Activated CD4-positive, alpha-beta memory T cell treated with anti-CD3 and anti-CD28 coated beads for 36 hours (primary cell): ENCODE measurements at regions of chr4 and their contacts with region 1.

Region 1: DNA sequence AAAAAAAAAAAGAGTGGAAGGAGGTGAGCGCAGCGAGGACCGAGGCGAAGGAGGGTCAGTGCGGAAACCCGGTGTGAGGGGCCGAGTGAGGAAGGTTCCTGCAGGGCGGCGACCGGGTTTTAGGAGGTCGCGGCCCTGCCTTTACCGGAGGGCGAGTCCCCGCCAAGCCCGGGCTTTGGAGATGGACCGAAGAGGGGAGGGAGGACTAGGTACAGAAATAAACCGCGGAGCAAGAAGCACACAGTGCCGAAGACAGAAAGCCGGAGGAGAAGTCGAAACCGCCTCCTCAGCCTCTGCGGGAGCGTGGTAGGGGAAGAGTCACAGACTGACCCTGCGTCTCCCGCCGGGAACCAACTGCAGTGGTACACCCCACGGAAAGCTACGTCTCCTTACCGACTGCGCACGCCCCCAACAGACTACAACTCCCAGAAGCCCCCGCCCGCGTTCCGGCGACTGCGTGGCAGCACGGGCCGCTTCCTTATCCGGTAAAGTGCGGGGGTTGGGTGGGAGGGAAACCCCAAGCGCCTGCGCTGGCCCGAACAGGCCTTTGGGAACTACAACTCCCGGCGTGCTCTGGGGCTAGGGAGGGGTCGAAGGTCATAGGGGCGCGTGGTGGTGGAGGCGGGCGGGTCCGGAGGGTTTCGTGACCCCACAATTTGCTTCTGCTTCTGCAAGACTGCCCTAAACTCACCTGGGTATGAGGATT is at the start of gene NFXL1:
- DNase-seq: peak; percentile 98
- H3K4me3 Mint-ChIP-seq: peak within 1 kb of the TSS; percentile 97
- H3K27ac Mint-ChIP-seq: peak within 1 kb of the TSS; percentile 93
- H3K4me1 Mint-ChIP-seq: peaks cover 30% of the 10 kb centered on the region
- H3K27me3 Mint-ChIP-seq: no peaks in the 10 kb centered on the region
- total RNA-seq, gene NFXL1: 10.9 to 12.0 TPM

Region 2: GRCh38 chr4:47485047-47485692 is 429.2 kb before region 1 on chr4 and contains the start of gene ATP10D:
- CTCF ChIA-PET with region 1: no interaction called
- POLR2A ChIA-PET with region 1: no interaction called
- intact Hi-C with region 1: loop called (anchors 5 kb)
- DNase-seq: peak; percentile 86
- H3K4me3 Mint-ChIP-seq: peak within 1 kb of the TSS; percentile 90
- H3K27ac Mint-ChIP-seq: peak within 1 kb of the TSS; percentile 76
- H3K4me1 Mint-ChIP-seq: peaks cover 20% of the 10 kb centered on the region
- H3K27me3 Mint-ChIP-seq: no peaks in the 10 kb centered on the region
- total RNA-seq, gene ATP10D: 2.8 to 3.0 TPM

Region 3: DNA sequence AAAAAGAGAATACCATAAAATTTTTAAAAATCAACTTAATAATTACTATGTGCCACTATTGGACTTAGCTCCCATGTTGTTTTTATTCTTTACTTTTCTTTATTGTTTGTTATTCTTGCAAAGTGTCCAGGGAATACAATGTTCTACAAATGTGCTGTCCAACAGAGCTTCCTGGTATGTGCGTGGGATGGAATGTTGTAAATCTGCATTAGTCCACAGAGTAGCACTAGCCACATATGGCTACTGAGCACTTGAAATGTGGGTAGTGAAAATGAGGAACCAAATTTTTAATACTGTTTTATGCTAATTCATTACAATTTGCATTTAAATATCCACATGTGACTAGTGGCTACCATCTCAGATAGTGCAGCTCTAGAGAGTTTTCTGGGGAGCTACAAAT is 62.2 kb before region 1 on chr4:
- CTCF ChIA-PET with region 1: no interaction called
- POLR2A ChIA-PET with region 1: no interaction called
- intact Hi-C with region 1: no loop called
- DNase-seq: no peak
- H3K4me3 Mint-ChIP-seq: no peak overlapping the region
- H3K27ac Mint-ChIP-seq: no peak overlapping the region
- H3K4me1 Mint-ChIP-seq: no peaks in the 10 kb centered on the region
- H3K27me3 Mint-ChIP-seq: no peaks in the 10 kb centered on the region

Region 4: GRCh38 chr4:47873877-47874541 is 40.4 kb before region 1 on chr4:
- CTCF ChIA-PET with region 1: no interaction called
- POLR2A ChIA-PET with region 1: no interaction called
- intact Hi-C with region 1: loop called (anchors 2 kb)
- DNase-seq: no peak
- H3K4me3 Mint-ChIP-seq: no peak overlapping the region
- H3K27ac Mint-ChIP-seq: peak overlapping the region; percentile 61
- H3K4me1 Mint-ChIP-seq: peaks cover 20% of the 10 kb centered on the region
- H3K27me3 Mint-ChIP-seq: no peaks in the 10 kb centered on the region

Region 5: DNA sequence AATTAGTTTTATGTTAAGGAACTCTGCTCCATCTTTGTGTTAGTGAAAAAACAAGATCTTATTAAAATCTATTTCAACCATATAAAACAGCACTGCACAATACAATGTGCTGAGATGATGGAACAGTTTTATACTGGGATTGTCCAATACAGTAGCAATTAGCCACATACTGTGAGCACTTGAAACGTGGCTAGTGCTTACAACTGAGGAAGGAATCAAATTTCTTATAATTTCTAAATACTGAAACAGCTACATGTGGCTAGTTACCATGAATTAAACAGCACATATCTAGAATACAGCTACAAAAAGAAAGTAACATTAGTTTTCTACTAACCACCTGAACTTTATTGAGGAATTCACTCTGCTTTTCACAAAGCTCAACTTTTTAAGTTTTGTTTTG is 14.7 kb before region 1 on chr4:
- CTCF ChIA-PET with region 1: no interaction called
- POLR2A ChIA-PET with region 1: no interaction called
- intact Hi-C with region 1: no loop called
- DNase-seq: no peak
- H3K4me3 Mint-ChIP-seq: no peak overlapping the region
- H3K27ac Mint-ChIP-seq: no peak overlapping the region
- H3K4me1 Mint-ChIP-seq: no peaks in the 10 kb centered on the region
- H3K27me3 Mint-ChIP-seq: no peaks in the 10 kb centered on the region

Region 6: DNA sequence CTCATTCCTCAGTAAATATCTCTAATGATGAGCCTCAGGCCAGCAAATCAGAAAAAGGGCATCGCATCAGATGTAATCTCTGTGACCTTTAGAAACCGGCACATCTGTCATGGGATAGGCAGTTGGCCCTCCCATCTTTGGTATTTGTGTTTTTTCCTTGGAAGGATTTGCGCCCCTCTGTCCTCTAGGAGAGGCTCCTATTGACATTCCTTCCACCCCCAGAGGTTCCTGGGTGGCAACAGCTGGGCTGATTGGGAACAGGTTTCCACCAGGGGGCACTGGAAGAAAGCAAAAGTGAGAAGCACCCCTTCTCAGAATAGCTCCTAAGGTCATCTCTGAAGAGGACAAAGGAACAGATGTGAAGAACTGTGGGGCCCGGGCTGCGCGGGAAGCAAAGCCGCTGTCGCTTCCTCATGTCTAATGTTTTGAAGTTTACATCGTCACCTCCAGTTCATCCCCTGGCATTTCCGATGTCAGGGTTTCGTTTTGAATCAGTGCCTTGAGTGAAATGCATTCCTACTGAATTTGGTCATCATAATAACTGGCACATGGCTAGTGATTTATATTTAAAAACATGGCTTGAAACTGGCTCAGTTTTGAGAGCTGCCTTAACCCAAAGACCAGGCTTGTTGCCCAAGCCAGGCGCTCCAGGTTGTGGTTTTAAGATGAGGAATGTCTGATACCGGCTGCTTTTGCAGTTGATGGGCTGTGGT is 213.5 kb after region 1 on chr4:
- CTCF ChIA-PET with region 1: no interaction called
- POLR2A ChIA-PET with region 1: no interaction called
- intact Hi-C with region 1: loop called (anchors 2 kb)
- DNase-seq: peak; percentile 93
- H3K4me3 Mint-ChIP-seq: peak overlapping the region; percentile 63
- H3K27ac Mint-ChIP-seq: peak overlapping the region; percentile 95
- H3K4me1 Mint-ChIP-seq: peaks cover 89% of the 10 kb centered on the region
- H3K27me3 Mint-ChIP-seq: no peaks in the 10 kb centered on the region

Region 7: GRCh38 chr4:48431401-48431800 is 517.0 kb after region 1 on chr4:
- CTCF ChIA-PET with region 1: no interaction called
- POLR2A ChIA-PET with region 1: no interaction called
- intact Hi-C with region 1: no loop called
- DNase-seq: no peak
- H3K4me3 Mint-ChIP-seq: no peak overlapping the region
- H3K27ac Mint-ChIP-seq: no peak overlapping the region
- H3K4me1 Mint-ChIP-seq: peaks cover 36% of the 10 kb centered on the region
- H3K27me3 Mint-ChIP-seq: no peaks in the 10 kb centered on the region